CD8-positive, alpha-beta T cell (primary cell): ENCODE measurements at regions of chr13 and their contacts with region 1.

Region 1: DNA sequence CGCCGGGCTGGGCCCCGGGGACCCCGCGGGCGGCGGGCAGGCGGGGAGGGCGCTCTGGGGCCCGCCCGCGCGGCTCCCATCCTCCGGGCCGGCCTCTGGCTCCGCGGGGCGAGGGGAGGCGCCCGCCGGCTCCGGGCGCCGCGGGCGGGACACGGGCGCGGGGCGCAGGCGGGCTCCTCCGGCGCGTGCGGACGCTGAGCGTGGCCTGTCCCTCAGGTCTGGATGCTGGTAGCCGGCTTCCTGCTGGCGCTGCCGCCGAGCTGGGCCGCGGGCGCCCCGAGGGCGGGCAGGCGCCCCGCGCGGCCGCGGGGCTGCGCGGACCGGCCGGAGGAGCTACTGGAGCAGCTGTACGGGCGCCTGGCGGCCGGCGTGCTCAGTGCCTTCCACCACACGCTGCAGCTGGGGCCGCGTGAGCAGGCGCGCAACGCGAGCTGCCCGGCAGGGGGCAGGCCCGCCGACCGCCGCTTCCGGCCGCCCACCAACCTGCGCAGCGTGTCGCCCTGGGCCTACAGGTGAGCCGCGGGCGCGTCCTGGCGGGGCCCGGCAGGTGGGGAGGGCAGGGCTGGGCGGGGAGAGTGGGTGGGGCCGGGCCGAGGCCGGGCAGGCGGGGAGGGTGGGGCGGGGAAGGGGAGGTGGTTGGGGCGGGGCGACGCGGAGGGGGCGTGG is 414 bp downstream of the IL17D start:
- DNase-seq: peak; percentile 56 to 90 (median 76)
- ATAC-seq: peak; percentile 86
- H3K4me3 ChIP-seq: no peak overlapping the region
- H3K4me3 Mint-ChIP-seq: no peak overlapping the region
- H3K27ac ChIP-seq: no peak overlapping the region
- H3K27ac Mint-ChIP-seq: no peak overlapping the region
- H3K4me1 ChIP-seq: peaks cover 11% of the 10 kb centered on the region
- H3K4me1 Mint-ChIP-seq: peaks cover 15% of the 10 kb centered on the region
- H3K27me3 ChIP-seq: peaks cover 0 to 3% of the 10 kb centered on the region in 2 experiments
- H3K27me3 Mint-ChIP-seq: peaks cover 12% of the 10 kb centered on the region
- CTCF ChIP-seq: peak; percentile 31

Region 2: DNA sequence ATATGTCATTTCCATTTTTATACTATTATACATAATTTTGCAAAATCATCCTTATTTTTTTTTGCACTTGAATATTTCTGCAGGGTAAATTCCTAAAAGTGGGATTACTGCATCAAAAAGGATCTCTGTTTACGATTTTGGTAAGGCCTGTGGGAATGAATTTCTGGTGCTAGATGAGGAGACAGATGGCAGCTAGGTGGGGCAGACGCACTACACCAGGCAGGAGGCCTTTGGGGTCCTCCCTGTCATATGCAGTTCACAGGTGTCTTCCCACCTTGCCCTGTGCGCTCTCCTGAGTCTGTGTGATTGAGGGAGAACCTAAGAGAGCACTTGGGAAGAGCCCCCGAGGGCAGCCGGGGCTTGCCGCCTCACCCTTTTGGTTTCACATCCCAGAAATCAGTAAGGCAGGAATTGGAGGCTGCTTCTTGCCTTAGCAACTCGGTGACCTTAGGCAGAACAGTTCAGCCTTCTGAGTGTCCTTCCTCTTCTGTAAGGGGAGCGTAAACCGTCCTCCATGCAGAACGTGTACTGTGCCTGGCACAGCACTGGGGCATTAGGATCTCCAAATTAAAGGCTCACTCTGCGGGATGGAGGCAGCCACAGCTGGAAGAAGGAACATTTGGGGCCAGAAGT is 497.7 kb before region 1 on chr13:
- CTCF ChIA-PET with region 1: no interaction called
- POLR2A ChIA-PET with region 1: no interaction called
- intact Hi-C with region 1: no loop called
- DNase-seq: no peak
- ATAC-seq: no peak
- H3K4me3 ChIP-seq: no peak overlapping the region
- H3K4me3 Mint-ChIP-seq: no peak overlapping the region
- H3K27ac ChIP-seq: no peak overlapping the region
- H3K27ac Mint-ChIP-seq: no peak overlapping the region
- H3K4me1 ChIP-seq: no peaks in the 10 kb centered on the region
- H3K4me1 Mint-ChIP-seq: no peaks in the 10 kb centered on the region
- H3K27me3 ChIP-seq: peaks cover 0 to 2% of the 10 kb centered on the region in 2 experiments
- H3K27me3 Mint-ChIP-seq: peaks cover 32% of the 10 kb centered on the region
- CTCF ChIP-seq: no peak

Region 3: GRCh38 chr13:20475927-20476691 is 227.8 kb before region 1 on chr13:
- CTCF ChIA-PET with region 1: no interaction called
- POLR2A ChIA-PET with region 1: interaction called, 4 read pairs
- intact Hi-C with region 1: loop called (anchors 5 kb)
- DNase-seq: peak; percentile 48 to 92 (median 69)
- ATAC-seq: peak; percentile 88
- H3K4me3 ChIP-seq: peak overlapping the region; percentile 9 to 52
- H3K4me3 Mint-ChIP-seq: peak overlapping the region; percentile 81
- H3K27ac ChIP-seq: peak overlapping the region; percentile 48 to 91
- H3K27ac Mint-ChIP-seq: peak overlapping the region; percentile 98
- H3K4me1 ChIP-seq: peaks cover 34% of the 10 kb centered on the region
- H3K4me1 Mint-ChIP-seq: peaks cover 63% of the 10 kb centered on the region
- H3K27me3 ChIP-seq: no peaks in the 10 kb centered on the region
- H3K27me3 Mint-ChIP-seq: no peaks in the 10 kb centered on the region
- CTCF ChIP-seq: no peak

Region 4: DNA sequence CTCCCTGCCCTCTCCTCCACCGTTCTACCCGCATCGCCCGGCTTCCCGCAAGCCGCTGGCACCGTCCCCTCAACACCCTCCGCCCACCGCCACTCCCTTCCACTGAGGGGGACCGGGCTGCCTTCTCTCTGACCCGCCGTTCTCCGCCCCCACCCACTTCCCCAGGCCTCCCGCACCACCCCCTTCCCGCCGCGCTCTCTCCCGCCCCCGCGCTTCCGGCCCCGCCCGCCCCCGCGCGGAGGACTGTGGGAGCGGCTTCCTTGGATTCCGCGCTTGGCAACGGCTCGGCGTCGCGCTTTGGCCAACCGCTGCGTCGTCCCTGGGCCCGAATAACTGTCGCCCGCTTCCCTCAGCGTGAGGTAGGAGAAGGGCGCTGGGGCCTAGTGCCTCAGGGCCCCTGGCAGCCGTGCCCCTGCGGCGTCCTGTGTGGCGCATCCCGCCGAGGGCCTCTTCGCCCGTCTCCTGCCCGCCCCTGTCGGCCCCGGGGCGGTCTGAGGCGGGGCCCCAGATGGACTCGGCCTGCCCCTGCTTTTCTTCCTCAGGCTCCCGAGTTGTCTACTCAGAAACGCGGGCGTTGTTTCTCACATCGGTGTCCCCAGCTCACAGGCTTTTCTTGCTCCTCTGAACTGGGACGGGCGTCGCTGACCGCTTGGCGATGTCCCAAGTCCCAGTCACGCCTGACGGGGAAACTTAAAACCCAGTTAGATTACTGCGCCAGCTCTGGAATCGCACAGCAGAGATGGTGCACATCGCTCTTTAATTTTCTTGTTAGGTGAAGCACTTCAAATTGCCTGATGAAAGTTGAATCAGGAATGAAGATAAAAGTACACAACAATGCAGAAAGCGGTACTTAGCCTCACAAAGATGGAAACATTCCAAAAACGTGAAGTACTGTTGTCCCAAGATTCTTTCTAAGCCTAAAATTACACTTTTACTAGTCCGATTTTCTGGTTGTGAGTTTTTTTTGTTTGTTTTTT is 136.7 kb before region 1 on chr13 and contains the start of gene IFT88:
- CTCF ChIA-PET with region 1: interaction called, 3 read pairs
- POLR2A ChIA-PET with region 1: no interaction called
- intact Hi-C with region 1: loop called (anchors 2 kb)
- DNase-seq: peak; percentile 49 to 90 (median 80)
- ATAC-seq: peak; percentile 86
- H3K4me3 ChIP-seq: peak within 1 kb of the TSS; percentile 70 to 71
- H3K4me3 Mint-ChIP-seq: peak within 1 kb of the TSS; percentile 87
- H3K27ac ChIP-seq: peak within 1 kb of the TSS; percentile 70 to 77
- H3K27ac Mint-ChIP-seq: peak within 1 kb of the TSS; percentile 89
- H3K4me1 ChIP-seq: no peaks in the 10 kb centered on the region
- H3K4me1 Mint-ChIP-seq: peaks cover 17% of the 10 kb centered on the region
- H3K27me3 ChIP-seq: no peaks in the 10 kb centered on the region
- H3K27me3 Mint-ChIP-seq: no peaks in the 10 kb centered on the region
- CTCF ChIP-seq: no peak
- total RNA-seq, gene IFT88: 7.5 to 8.2 TPM

Region 5: DNA sequence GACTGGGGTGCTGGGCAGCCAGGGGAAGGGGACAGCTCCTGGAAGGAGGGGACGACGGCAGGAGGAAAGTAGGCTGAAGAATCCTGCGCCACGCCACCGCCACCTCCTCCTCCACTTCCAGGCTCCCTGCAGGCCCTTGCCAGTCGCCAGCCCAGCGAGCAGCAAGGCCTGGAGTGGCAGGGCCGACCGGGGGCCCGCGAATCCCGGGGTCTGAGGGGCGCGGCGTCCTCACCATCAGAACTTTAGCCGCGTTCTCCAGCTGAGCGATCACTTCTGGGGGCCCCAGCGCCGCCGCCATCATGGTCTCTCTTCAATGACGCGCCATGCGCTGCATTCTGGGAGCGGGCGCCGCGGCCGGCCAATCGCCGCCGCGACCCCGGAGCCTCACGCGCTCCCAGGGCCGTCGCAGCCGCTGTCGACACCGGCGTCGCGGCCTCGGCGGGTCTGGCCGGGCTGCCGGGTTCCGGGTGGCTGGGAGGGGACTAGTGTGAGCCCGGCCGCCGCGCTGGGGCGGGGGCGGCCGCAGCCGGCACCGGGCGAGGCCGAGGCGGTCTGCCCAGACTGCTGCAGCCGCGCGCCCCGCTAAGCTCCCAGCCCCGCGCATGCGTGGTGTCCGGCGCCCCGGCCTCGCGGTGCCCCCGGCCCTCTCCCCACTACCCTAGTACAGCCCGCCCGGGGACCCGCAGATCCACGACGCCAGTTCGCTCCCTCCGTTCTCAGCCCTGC is 198.7 kb after region 1 on chr13 and contains the start of gene XPO4:
- CTCF ChIA-PET with region 1: no interaction called
- POLR2A ChIA-PET with region 1: interaction called, 7 read pairs
- intact Hi-C with region 1: loop called in 1 of 2 experiments (anchors 5 kb)
- DNase-seq: peak; percentile 55 to 88 (median 75)
- ATAC-seq: peak; percentile 96
- H3K4me3 ChIP-seq: peak within 1 kb of the TSS; percentile 81 to 89
- H3K4me3 Mint-ChIP-seq: peak within 1 kb of the TSS; percentile 94
- H3K27ac ChIP-seq: peak within 1 kb of the TSS; percentile 80 to 83
- H3K27ac Mint-ChIP-seq: peak within 1 kb of the TSS; percentile 93
- H3K4me1 ChIP-seq: peaks cover 11% of the 10 kb centered on the region
- H3K4me1 Mint-ChIP-seq: peaks cover 31% of the 10 kb centered on the region
- H3K27me3 ChIP-seq: no peaks in the 10 kb centered on the region
- H3K27me3 Mint-ChIP-seq: no peaks in the 10 kb centered on the region
- CTCF ChIP-seq: no peak
- total RNA-seq, gene XPO4: 23.8 to 24.5 TPM

Region 6: GRCh38 chr13:21458813-21459701 is 755.1 kb after region 1 on chr13 and contains the start of gene ZDHHC20:
- CTCF ChIA-PET with region 1: no interaction called
- POLR2A ChIA-PET with region 1: no interaction called
- intact Hi-C with region 1: loop called (anchors 5 to 10 kb)
- DNase-seq: peak; percentile 77 to 96 (median 90)
- ATAC-seq: peak; percentile 93
- H3K4me3 ChIP-seq: peak within 1 kb of the TSS; percentile 69 to 78
- H3K4me3 Mint-ChIP-seq: peak within 1 kb of the TSS; percentile 95
- H3K27ac ChIP-seq: peak within 1 kb of the TSS; percentile 80 to 89
- H3K27ac Mint-ChIP-seq: peak within 1 kb of the TSS; percentile 96
- H3K4me1 ChIP-seq: peaks cover 15% of the 10 kb centered on the region
- H3K4me1 Mint-ChIP-seq: peaks cover 45% of the 10 kb centered on the region
- H3K27me3 ChIP-seq: no peaks in the 10 kb centered on the region
- H3K27me3 Mint-ChIP-seq: no peaks in the 10 kb centered on the region
- CTCF ChIP-seq: no peak
- total RNA-seq, gene ZDHHC20: 81.0 to 81.1 TPM